ENCODE measurements at regions of chr4 and their contacts with region 1.

Region 1: GRCh38 chr4:119628308-119629141 is at the start of gene PDE5A:
- ATAC-seq: peak; percentile 82 to 91 (median 88)
- H3K4me3 ChIP-seq: peak within 1 kb of the TSS; percentile 53 to 87 (median 73)
- H3K27ac ChIP-seq: no peak within 1 kb of the TSS
- H3K4me1 ChIP-seq: peaks cover 0 to 8% of the 10 kb centered on the region in 2 donors
- total RNA-seq, gene PDE5A: 4.0 to 24.5 (median 8.0) TPM

Region 2: GRCh38 chr4:119785963-119786362 is 157.4 kb after region 1 on chr4:
- in situ Hi-C with region 1: loop called in 1 of 9 experiments (anchors 25 kb)
- ATAC-seq: no peak
- H3K4me3 ChIP-seq: no peak overlapping the region
- H3K27ac ChIP-seq: no peak overlapping the region
- H3K4me1 ChIP-seq: no peaks in the 10 kb centered on the region

Region 3: GRCh38 chr4:119872371-119873031 is 244.0 kb after region 1 on chr4:
- in situ Hi-C with region 1: no loop called
- ATAC-seq: no peak
- H3K4me3 ChIP-seq: no peak overlapping the region
- H3K27ac ChIP-seq: no peak overlapping the region
- H3K4me1 ChIP-seq: no peaks in the 10 kb centered on the region

Region 4: DNA sequence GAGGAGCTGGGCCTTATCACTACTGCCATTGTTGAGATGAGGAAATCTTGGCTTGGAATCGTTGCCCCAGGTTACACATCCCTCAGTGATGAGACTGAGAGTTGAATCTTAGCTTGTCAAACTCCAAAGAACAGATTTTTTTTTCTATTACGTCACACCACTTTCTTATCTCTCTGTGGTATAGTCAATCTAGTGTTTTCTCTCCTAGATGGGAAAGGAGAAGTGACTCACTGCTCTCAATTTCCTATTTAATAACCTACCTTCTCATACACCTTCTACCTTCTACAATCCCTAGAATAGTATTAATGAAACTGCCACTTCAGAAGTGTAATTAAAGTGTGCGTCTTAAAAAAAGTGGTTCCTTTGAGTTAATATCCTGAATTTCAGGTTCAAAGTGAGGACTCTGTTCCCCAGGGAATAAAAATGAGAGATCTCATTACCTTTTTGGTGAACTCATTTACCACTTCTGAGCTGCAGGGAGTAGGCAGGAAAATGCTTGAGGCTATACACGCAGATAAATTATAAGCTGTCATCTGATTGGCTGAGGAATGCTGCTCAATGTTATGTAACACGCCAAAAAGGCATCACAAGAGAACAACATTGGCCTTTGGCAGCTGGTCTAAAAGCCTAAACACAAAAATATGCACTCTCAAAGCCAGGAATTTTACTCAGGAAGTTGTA is 378.8 kb after region 1 on chr4:
- in situ Hi-C with region 1: no loop called
- ATAC-seq: peak in 2 of 8 experiments; percentile 51 to 54
- H3K4me3 ChIP-seq: no peak overlapping the region
- H3K27ac ChIP-seq: no peak overlapping the region
- H3K4me1 ChIP-seq: peaks cover 0 to 11% of the 10 kb centered on the region in 2 donors

Measured in motor neuron (in vitro differentiated cells).